ENCODE measurements at regions of chr4 and their contacts with region 1.

Region 1: DNA sequence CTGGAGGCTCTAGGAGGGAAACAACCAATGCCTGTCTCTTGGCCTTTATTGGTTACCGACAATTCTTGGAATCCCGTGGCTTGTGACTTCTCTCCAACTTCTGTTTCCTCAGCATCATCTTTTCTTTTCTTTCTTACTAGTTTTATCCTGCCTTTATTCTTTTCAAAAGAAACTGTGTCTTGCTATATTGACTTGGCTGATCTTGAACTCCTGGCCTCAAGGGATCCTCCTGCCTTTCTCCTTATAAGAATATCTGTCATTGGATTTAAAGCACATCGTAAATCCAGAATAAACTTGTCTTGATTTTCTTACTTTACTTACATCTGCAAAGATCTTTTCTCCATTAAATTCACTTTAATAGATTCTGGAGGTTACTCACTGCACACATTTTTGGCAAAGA is 49.9 kb upstream of the UGT2B10 start:
- DNase-seq: no peak
- H3K4me3 ChIP-seq: no peak overlapping the region
- H3K27ac ChIP-seq: no peak overlapping the region
- H3K4me1 ChIP-seq: no peaks in the 10 kb centered on the region
- H3K27me3 ChIP-seq: no peaks in the 10 kb centered on the region
- CTCF ChIP-seq: no peak
- POLR2A ChIP-seq: no peak

Region 2: GRCh38 chr4:68748181-68748991 is 17.5 kb before region 1 on chr4:
- intact Hi-C with region 1: loop called (anchors 2 kb)
- DNase-seq: no peak
- H3K4me3 ChIP-seq: no peak overlapping the region
- H3K27ac ChIP-seq: no peak overlapping the region
- H3K4me1 ChIP-seq: no peaks in the 10 kb centered on the region
- H3K27me3 ChIP-seq: no peaks in the 10 kb centered on the region
- CTCF ChIP-seq: no peak
- POLR2A ChIP-seq: no peak